WTC11 (cell line): ENCODE measurements at regions of chr1 and their contacts with region 1.

Region 1: GRCh38 chr1:1619917-1620785 is 4.9 kb downstream of the MIB2 start:
- DNase-seq: peak; percentile 67
- ATAC-seq: peak; percentile 25
- H3K4me3 Mint-ChIP-seq: no peak overlapping the region
- H3K27ac Mint-ChIP-seq: peak overlapping the region; percentile 23; the same call in 1 of the 2 replicates
- H3K4me1 Mint-ChIP-seq: peaks cover 2% of the 10 kb centered on the region; the same call in 1 of the 2 replicates
- H3K27me3 Mint-ChIP-seq: no peaks in the 10 kb centered on the region
- CTCF ChIP-seq: peak; percentile 53

Region 2: DNA sequence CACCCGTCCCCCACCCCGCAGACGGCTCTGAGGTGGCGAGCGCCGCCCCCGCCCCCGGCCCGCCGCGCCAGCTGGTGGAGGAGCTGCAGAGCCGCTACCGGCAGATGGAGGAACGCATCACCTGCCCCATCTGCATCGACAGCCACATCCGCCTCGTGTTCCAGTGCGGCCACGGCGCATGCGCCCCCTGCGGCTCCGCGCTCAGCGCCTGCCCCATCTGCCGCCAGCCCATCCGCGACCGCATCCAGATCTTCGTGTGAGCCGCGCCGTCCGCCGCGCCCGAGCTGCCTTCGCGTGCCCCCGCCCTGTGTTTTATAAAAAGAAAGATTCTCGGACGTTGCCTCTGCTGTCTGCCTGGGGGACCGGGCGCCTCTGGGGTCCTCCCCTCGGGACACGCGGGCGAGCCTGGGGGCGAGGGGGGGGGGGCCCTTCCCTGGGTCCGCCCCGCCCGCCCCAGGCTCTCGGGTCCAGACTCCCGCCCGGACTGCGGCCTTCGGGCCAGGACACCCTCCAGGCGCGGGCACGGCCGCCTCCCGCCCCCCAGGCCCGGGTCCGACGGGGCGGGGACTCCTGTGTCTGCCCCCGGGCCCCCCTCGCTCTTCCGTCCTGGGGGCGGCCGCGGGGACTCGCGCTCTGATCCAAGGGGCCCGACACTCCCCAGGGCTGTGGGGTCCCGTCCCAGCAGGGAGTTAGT is 10.3 kb after region 1 on chr1:
- CTCF ChIA-PET with region 1: interaction called, 30 read pairs
- POLR2A ChIA-PET with region 1: interaction called, 7 read pairs
- DNase-seq: peak; percentile 85
- ATAC-seq: no peak; the same call in 1 of the 2 replicates
- H3K4me3 Mint-ChIP-seq: peak overlapping the region; percentile 61
- H3K27ac Mint-ChIP-seq: no peak overlapping the region
- H3K4me1 Mint-ChIP-seq: peaks cover 2% of the 10 kb centered on the region; the same call in 1 of the 2 replicates
- H3K27me3 Mint-ChIP-seq: peaks cover 6% of the 10 kb centered on the region
- CTCF ChIP-seq: no peak

Region 3: DNA sequence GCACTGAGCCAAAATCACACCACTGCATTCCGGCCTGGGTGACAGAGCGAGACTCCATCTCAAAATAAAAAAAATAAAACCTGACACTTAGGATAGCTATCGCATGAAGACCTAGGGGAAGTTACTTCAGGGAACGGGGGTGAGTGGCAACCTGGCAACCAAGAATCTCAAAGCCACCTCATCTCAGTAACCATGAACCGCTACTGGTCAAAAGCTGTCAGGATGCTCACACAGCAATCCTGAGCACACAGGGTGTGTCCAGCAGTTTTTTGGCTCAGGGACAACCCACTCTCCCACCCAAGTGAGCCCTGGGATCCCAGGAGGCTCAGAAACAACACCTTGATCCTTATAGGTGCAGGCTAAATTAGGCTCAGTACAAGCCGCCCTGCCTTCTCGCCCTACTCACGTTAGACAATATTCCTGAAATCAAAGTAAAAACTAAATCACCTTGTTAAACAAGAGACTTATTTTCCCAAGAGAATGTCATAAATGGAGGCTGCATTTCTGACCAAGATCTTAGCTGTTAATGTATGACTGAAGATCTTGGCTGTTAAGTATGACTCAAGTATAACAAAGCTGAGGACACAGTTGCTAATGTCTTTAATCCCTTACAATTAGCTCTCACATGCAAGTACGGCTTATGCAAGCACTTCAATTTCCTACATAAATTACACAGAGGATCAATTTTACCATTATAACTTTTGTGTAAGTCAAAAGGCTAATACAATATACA is 206.4 kb after region 1 on chr1:
- CTCF ChIA-PET with region 1: no interaction called
- POLR2A ChIA-PET with region 1: no interaction called
- DNase-seq: no peak
- ATAC-seq: no peak
- H3K4me3 Mint-ChIP-seq: no peak overlapping the region
- H3K27ac Mint-ChIP-seq: peak overlapping the region; percentile 91
- H3K4me1 Mint-ChIP-seq: peaks cover 25% of the 10 kb centered on the region
- H3K27me3 Mint-ChIP-seq: no peaks in the 10 kb centered on the region
- CTCF ChIP-seq: no peak